CD4-positive, alpha-beta memory T cell (primary cell): ENCODE measurements at regions of chr22 and their contacts with region 1.

Region 1: GRCh38 chr22:36506637-36507517 is at the start of gene FOXRED2:
- DNase-seq: peak; percentile 87 to 91 (median 90)
- H3K4me3 ChIP-seq: peak within 1 kb of the TSS in 1 of 2 donors; percentile 62
- H3K4me3 Mint-ChIP-seq: peak within 1 kb of the TSS; percentile 39 to 79 (median 73)
- H3K27ac ChIP-seq: peak within 1 kb of the TSS; percentile 22
- H3K27ac Mint-ChIP-seq: peak within 1 kb of the TSS; percentile 42 to 83 (median 74)
- H3K4me1 ChIP-seq: peaks cover 15% of the 10 kb centered on the region
- H3K4me1 Mint-ChIP-seq: peaks cover 8 to 25% (median 9%) of the 10 kb centered on the region in 4 donors
- H3K27me3 ChIP-seq: no peaks in the 10 kb centered on the region
- H3K27me3 Mint-ChIP-seq: no peaks in the 10 kb centered on the region
- total RNA-seq, gene FOXRED2: 7.3 to 8.5 TPM

Region 2: GRCh38 chr22:36481393-36482168 is 25.3 kb before region 1 on chr22 and contains the start of gene TXN2:
- CTCF ChIA-PET with region 1: interaction called, 7 read pairs
- POLR2A ChIA-PET with region 1: interaction called, 5 read pairs
- intact Hi-C with region 1: loop called (anchors 1 kb)
- DNase-seq: peak; percentile 97 to 99 (median 97)
- H3K4me3 ChIP-seq: peak within 1 kb of the TSS; percentile 80 to 86
- H3K4me3 Mint-ChIP-seq: peak within 1 kb of the TSS; percentile 90 to 100 (median 98)
- H3K27ac ChIP-seq: peak within 1 kb of the TSS; percentile 80
- H3K27ac Mint-ChIP-seq: peak within 1 kb of the TSS; percentile 93 to 100 (median 99)
- H3K4me1 ChIP-seq: peaks cover 22% of the 10 kb centered on the region
- H3K4me1 Mint-ChIP-seq: peaks cover 12 to 31% (median 17%) of the 10 kb centered on the region in 4 donors
- H3K27me3 ChIP-seq: no peaks in the 10 kb centered on the region
- H3K27me3 Mint-ChIP-seq: peaks cover 0 to 3% of the 10 kb centered on the region in 2 donors
- total RNA-seq, gene TXN2: 33.5 to 34.5 TPM